ENCODE measurements at regions of chr14 and their contacts with region 1.

Region 1: GRCh38 chr14:77760381-77761246 is at the start of gene SNW1:
- DNase-seq: peak; percentile 93
- H3K4me3 Mint-ChIP-seq: peak within 1 kb of the TSS; percentile 95
- H3K27ac Mint-ChIP-seq: peak within 1 kb of the TSS; percentile 93
- H3K4me1 Mint-ChIP-seq: peaks cover 40% of the 10 kb centered on the region
- H3K27me3 Mint-ChIP-seq: no peaks in the 10 kb centered on the region
- total RNA-seq, gene SNW1: 117 to 120 TPM

Region 2: GRCh38 chr14:77436042-77436441 is 324.6 kb before region 1 on chr14:
- CTCF ChIA-PET with region 1: no interaction called
- POLR2A ChIA-PET with region 1: no interaction called
- DNase-seq: no peak
- H3K4me3 Mint-ChIP-seq: no peak overlapping the region
- H3K27ac Mint-ChIP-seq: no peak overlapping the region
- H3K4me1 Mint-ChIP-seq: no peaks in the 10 kb centered on the region
- H3K27me3 Mint-ChIP-seq: no peaks in the 10 kb centered on the region

Region 3: DNA sequence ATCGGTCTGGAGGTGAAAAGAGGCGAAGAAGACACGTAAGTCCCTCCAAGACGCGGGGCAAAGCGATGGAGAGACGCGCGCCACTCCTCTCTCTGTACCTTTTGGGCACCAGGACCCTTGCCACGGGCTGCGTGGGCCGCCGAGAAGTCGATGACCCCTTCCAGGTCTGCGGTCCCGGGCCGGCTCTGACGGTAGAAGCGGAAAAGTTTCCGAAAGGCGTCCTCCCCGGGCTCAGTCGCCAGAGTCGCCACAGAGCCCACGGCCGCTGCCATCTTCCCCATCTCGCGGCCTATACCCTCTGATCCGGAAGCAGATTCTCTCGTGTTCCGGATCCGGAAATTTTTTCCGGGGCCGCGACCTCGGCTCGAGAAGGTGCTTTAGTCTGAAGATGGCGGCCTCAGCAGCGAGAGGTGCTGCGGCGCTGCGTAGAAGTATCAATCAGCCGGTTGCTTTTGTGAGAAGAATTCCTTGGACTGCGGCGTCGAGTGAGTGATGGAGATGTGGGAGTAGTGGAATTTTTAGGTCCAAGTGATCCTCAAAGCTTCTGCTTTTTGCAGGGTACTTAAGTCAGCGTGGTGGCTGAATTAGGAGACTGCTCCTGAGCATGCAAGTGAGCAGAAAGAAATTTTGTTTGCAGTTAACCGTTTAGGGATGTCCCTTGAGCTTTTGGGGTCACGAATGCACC is 52.7 kb before region 1 on chr14 and contains the starts of genes ALKBH1 and SLIRP:
- CTCF ChIA-PET with region 1: no interaction called
- POLR2A ChIA-PET with region 1: interaction called, 26 read pairs
- DNase-seq: peak; percentile 89
- H3K4me3 Mint-ChIP-seq: peak within 1 kb of the TSS; percentile 96
- H3K27ac Mint-ChIP-seq: peak within 1 kb of the TSS; percentile 85
- H3K4me1 Mint-ChIP-seq: peaks cover 38% of the 10 kb centered on the region
- H3K27me3 Mint-ChIP-seq: no peaks in the 10 kb centered on the region
- total RNA-seq, gene ALKBH1: 12.5 to 12.8 TPM
- total RNA-seq, gene SLIRP: 56.4 to 76.7 TPM

Region 4: DNA sequence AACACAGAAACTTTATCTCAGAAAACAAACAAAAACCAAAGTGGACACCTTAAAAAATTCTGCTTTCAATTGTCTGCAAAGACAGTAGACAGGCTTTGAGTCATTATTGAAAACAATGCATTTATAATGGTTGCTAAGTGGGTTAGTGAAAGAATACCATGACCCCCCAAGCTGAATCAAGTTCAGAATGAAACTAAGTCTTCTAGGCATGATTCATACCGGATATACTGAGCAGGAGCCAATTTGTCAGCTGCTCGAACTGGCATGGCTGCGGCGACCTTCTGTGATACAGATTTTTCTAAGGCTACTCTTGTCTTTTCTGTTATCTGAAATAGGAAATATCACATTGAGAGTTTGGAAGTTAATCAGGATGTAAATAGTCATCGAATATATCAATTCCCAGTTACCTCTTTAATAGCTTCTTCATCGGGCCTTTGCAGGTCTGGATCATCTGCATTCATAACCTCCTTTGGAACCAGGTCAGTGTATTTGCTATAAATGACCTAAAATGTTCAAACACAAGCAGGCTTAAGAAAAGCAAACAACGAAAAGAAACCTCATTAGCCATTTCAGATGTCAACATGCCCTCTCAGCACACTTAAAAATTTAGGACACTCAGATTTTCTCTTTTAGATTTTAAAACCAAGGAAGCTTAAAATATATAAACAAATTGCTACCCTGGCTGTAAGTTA is 21.9 kb before region 1 on chr14:
- CTCF ChIA-PET with region 1: no interaction called
- POLR2A ChIA-PET with region 1: interaction called, 11 read pairs
- DNase-seq: peak; percentile 49
- H3K4me3 Mint-ChIP-seq: peak overlapping the region; percentile 8
- H3K27ac Mint-ChIP-seq: peak overlapping the region; percentile 74
- H3K4me1 Mint-ChIP-seq: peaks cover 34% of the 10 kb centered on the region
- H3K27me3 Mint-ChIP-seq: no peaks in the 10 kb centered on the region

Region 5: DNA sequence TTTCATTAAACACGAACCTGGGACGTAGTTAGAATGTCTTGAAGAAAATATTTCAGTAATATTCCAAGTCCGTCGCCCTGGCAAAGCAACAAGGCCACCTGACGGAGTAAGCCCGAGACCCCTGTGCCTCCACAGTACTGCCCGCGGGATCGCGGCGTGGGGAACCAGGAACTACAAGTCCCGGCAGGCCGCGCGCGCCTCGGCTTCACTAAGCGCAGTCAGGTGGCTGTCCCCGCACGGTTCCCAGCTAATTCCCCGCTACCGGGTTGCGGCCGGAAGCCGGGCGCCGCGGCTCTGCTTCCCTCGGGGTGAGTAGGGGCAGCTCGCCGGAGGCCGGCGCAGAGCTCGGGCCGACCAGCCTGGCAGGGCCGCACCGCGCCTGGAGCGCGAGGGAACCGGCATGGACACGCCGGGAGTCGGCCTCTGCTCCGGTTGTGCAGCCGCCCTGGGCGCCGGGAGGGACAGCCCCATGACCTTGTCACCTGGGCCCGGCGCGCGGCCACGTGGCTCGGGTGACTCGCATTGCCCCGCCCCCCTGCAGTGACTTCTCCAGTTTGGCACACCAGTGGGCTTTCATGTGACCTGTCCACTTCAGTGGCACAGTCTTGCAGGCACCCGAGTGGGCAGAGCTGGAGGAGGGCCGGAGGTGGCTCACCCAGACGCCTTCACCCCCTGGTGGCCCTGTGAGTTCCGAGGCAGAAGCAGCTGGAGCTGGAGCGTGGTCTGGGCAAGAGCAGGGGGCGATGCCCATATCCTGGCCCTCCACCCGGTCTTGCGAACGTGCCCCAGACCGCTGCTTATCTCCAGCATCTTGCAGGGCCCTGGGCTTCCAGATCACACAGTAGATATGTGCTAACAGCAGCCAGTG is 39.5 kb after region 1 on chr14 and contains the start of gene ADCK1:
- CTCF ChIA-PET with region 1: interaction called, 7 read pairs
- POLR2A ChIA-PET with region 1: interaction called, 29 read pairs
- DNase-seq: peak; percentile 87
- H3K4me3 Mint-ChIP-seq: peak within 1 kb of the TSS; percentile 76
- H3K27ac Mint-ChIP-seq: peak within 1 kb of the TSS; percentile 52
- H3K4me1 Mint-ChIP-seq: peaks cover 13% of the 10 kb centered on the region
- H3K27me3 Mint-ChIP-seq: peaks cover 2% of the 10 kb centered on the region
- total RNA-seq, gene ADCK1: 2.2 to 2.8 TPM

Measured in activated CD4-positive, alpha-beta memory T cell treated with anti-CD3 and anti-CD28 coated beads, Interleukin-2, amount 10 ng/mL, durations not matched to agents 7 days and 5 days (primary cell).